Naive thymus-derived CD4-positive, alpha-beta T cell (primary cell): ENCODE measurements at regions of chr2 and their contacts with region 1.

Region 1: GRCh38 chr2:98634401-98635092 is 26.2 kb downstream of the UNC50 start:
- DNase-seq: peak in 5 of 9 donors; percentile 26 to 64 (median 38)
- ATAC-seq: peak; percentile 63
- H3K4me3 ChIP-seq: no peak overlapping the region
- H3K4me3 Mint-ChIP-seq: peak overlapping the region in 9 of 10 donors; percentile 26 to 73 (median 68)
- H3K27ac ChIP-seq: peak overlapping the region; percentile 56
- H3K27ac Mint-ChIP-seq: peak overlapping the region; percentile 84 to 97 (median 93)
- H3K4me1 ChIP-seq: peaks cover 33 to 46% of the 10 kb centered on the region in 2 donors
- H3K4me1 Mint-ChIP-seq: peaks cover 22 to 53% (median 38%) of the 10 kb centered on the region in 7 donors
- H3K27me3 ChIP-seq: no peaks in the 10 kb centered on the region
- H3K27me3 Mint-ChIP-seq: no peaks in the 10 kb centered on the region

Region 2: DNA sequence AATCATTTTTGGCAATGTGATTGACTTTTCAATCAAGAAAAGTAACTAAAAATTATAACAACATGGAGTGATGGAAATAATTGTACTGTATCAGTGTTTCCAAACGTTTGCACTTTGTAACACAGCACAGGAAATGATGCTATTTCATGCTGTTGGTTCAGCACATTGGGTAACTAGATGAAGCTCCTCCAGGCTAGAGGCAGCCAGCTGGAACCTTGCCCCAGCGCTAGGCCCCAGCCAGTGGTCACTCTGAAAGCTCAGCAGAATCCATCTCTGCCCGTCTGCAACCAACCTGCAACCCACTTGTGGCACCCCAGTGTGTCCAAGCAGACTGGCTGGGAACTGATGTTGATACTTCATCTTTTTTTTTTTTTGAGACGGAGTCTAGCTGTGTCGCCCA is 10.9 kb before region 1 on chr2:
- CTCF ChIA-PET with region 1: no interaction called
- POLR2A ChIA-PET with region 1: interaction called, 4 read pairs
- intact Hi-C with region 1: loop called in 1 of 2 experiments (anchors 2 kb)
- DNase-seq: no peak
- ATAC-seq: no peak
- H3K4me3 ChIP-seq: no peak overlapping the region
- H3K4me3 Mint-ChIP-seq: no peak overlapping the region
- H3K27ac ChIP-seq: no peak overlapping the region
- H3K27ac Mint-ChIP-seq: peak overlapping the region in 5 of 9 donors; percentile 43 to 87 (median 61)
- H3K4me1 ChIP-seq: no peaks in the 10 kb centered on the region
- H3K4me1 Mint-ChIP-seq: peaks cover 12 to 57% (median 28%) of the 10 kb centered on the region in 7 donors
- H3K27me3 ChIP-seq: no peaks in the 10 kb centered on the region
- H3K27me3 Mint-ChIP-seq: no peaks in the 10 kb centered on the region

Region 3: GRCh38 chr2:99171377-99172140 is 537.0 kb after region 1 on chr2:
- CTCF ChIA-PET with region 1: no interaction called
- POLR2A ChIA-PET with region 1: no interaction called
- intact Hi-C with region 1: loop called in 1 of 2 experiments (anchors 10 kb)
- DNase-seq: no peak
- ATAC-seq: no peak
- H3K4me3 ChIP-seq: no peak overlapping the region
- H3K4me3 Mint-ChIP-seq: no peak overlapping the region
- H3K27ac ChIP-seq: no peak overlapping the region
- H3K27ac Mint-ChIP-seq: peak overlapping the region in 5 of 9 donors; percentile 21 to 77 (median 60)
- H3K4me1 ChIP-seq: no peaks in the 10 kb centered on the region
- H3K4me1 Mint-ChIP-seq: peaks cover 8 to 37% (median 31%) of the 10 kb centered on the region in 7 donors
- H3K27me3 ChIP-seq: no peaks in the 10 kb centered on the region
- H3K27me3 Mint-ChIP-seq: no peaks in the 10 kb centered on the region